ENCODE measurements at regions of chr16 and their contacts with region 1.

Region 1: DNA sequence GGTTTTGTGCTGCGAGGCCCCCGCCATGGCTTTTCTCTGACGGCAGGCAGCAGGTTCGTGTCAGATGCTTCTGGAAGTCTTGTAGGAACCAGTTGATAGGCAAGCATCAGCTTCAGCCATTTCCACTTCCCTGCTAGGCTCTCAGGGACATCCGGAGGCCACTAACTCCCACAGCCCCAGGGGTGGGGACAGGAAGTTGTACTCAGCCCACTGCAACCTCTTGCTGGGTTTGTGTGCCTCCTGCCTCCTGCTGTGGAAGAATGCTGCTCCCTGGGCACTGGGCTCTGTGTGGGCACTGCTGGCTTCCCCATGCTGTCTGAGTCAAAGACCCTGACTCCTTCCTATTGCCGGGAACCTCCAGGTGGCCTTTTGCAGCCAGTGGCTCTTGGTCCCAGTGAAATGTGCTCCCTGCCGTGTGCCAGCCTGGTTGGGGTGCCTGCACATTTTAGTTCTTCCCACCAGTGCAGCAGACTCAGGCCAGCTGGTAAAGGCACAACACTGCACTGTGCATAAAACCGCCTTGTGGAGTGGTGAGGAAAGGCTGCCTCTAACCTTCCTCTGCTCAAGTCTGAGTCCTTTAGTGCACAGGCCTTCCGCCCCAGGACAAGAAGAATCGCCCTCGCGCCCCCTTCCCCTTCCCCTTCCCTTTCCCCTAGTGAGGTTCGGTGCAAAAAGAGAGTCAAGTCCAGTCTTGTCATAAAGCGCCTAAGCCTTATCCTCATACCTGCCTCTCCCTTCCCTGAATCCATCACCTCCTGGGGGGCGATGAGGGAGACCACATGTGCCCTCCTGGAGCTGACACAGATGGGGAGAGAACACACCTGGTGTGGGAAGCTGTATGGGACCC is 16.6 kb downstream of the LDHD start:
- DNase-seq: peak; percentile 72
- ATAC-seq: peak; percentile 52
- H3K4me3 Mint-ChIP-seq: peak overlapping the region; percentile 24
- H3K27ac Mint-ChIP-seq: peak overlapping the region; percentile 92
- H3K4me1 Mint-ChIP-seq: peaks cover 54% of the 10 kb centered on the region
- H3K27me3 Mint-ChIP-seq: no peaks in the 10 kb centered on the region
- CTCF ChIP-seq: no peak

Region 2: DNA sequence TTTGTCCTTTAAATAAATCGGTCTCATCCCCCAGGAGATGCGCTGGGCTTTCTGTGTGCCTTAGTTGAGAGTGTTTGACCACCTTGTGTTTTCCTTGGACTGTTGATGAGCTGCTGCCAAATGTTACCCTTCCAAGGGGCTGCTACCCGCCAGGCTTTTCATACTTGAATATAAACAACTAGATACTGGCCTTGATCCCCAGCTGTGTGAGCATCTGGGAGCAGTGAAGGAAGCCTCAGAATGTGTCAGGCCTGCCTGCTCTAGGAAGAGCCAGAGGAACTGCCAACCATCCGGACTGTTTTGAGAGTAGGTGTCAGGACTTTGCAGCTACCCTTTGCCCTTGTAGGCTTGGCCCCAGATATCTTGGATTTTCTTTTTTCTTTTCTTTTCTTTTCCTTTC is 41.2 kb before region 1 on chr16:
- CTCF ChIA-PET with region 1: no interaction called
- POLR2A ChIA-PET with region 1: no interaction called
- intact Hi-C with region 1: loop called (anchors 5 kb)
- DNase-seq: no peak
- ATAC-seq: no peak
- H3K4me3 Mint-ChIP-seq: no peak overlapping the region
- H3K27ac Mint-ChIP-seq: no peak overlapping the region
- H3K4me1 Mint-ChIP-seq: peaks cover 17% of the 10 kb centered on the region
- H3K27me3 Mint-ChIP-seq: peaks cover 2% of the 10 kb centered on the region
- CTCF ChIP-seq: no peak